Prostate gland (tissue), 2 donors: ENCODE measurements at regions of chr7 and their contacts with region 1.

Region 1: DNA sequence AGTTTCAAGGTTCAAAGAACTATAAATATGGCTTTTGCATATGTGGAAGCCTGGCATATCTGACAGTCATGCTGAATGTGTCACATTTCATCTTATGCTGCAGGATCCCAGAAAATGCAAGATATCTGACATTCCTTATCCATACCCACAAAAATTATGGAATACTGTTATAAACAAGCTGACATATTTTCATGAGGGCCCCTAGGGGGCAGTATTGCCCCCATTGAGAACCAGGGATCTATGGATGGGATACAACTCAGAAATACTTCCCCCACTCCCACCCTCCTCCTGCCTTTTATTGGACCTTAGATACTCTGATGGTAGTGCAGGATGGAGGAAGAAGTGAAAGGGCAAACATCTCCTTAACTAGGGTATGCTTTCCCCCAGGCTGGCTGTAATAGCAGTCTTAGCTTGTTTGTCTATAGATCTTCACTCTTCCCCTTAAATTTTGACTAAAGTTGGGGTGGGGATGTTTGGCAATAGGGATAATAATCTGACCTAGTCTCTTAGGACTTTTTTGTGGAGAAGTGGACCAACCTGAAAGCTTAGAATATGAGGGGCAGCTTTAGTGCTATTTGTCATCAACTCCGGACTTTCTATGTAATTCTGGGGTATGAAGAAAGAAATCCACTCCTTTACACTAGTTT is 3.5 kb upstream of the GNGT1 start:
- DNase-seq: no peak
- H3K4me3 ChIP-seq: no peak overlapping the region
- H3K27ac ChIP-seq: no peak overlapping the region
- H3K4me1 ChIP-seq: no peaks in the 10 kb centered on the region
- H3K27me3 ChIP-seq: no peaks in the 10 kb centered on the region
- CTCF ChIP-seq: peak in 3 of 4 experiments; percentile 43 to 75 (median 47)
- POLR2A ChIP-seq: no peak

Region 2: GRCh38 chr7:94087664-94088352 is 184.9 kb after region 1 on chr7:
- intact Hi-C with region 1: loop called (anchors 5 kb)
- DNase-seq: peak; percentile 36
- H3K4me3 ChIP-seq: no peak overlapping the region
- H3K27ac ChIP-seq: no peak overlapping the region
- H3K4me1 ChIP-seq: no peaks in the 10 kb centered on the region
- H3K27me3 ChIP-seq: no peaks in the 10 kb centered on the region
- CTCF ChIP-seq: peak in 3 of 4 experiments; percentile 67 to 75 (median 67)
- POLR2A ChIP-seq: no peak

Region 3: GRCh38 chr7:94276795-94277194 is 373.9 kb after region 1 on chr7:
- intact Hi-C with region 1: loop called (anchors 10 kb)
- DNase-seq: no peak
- H3K4me3 ChIP-seq: no peak overlapping the region
- H3K27ac ChIP-seq: no peak overlapping the region
- H3K4me1 ChIP-seq: no peaks in the 10 kb centered on the region
- H3K27me3 ChIP-seq: no peaks in the 10 kb centered on the region
- CTCF ChIP-seq: no peak
- POLR2A ChIP-seq: no peak

Region 4: GRCh38 chr7:94338921-94339371 is 436.0 kb after region 1 on chr7:
- intact Hi-C with region 1: no loop called
- DNase-seq: no peak
- H3K4me3 ChIP-seq: no peak overlapping the region
- H3K27ac ChIP-seq: no peak overlapping the region
- H3K4me1 ChIP-seq: no peaks in the 10 kb centered on the region
- H3K27me3 ChIP-seq: no peaks in the 10 kb centered on the region
- CTCF ChIP-seq: no peak
- POLR2A ChIP-seq: no peak